Heart right ventricle (tissue), 16 donors: ENCODE measurements at regions of chr17 and their contacts with region 1.

Region 1: DNA sequence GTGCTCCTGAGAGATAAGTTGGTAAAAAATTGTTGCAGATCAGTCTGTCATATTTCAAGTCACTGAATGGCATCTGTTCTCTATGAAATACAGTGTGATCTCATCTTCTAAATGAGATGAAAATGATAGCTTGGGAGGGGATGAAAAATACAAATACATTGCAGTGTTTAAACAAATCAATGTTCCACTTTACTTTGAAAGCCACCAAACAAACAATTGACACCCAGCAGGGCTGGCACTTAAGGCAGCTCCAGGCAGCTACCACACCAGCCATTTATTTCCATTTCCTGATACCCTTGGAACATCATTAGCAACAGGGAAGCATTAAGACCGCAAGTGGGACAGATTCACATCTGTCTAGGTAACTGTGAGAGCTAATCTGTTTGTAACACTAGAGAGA is 827.6 kb upstream of the KIF2B start:
- DNase-seq: no peak
- ATAC-seq: no peak
- H3K4me3 ChIP-seq: no peak overlapping the region
- H3K27ac ChIP-seq: no peak overlapping the region
- H3K4me1 ChIP-seq: no peaks in the 10 kb centered on the region
- H3K27me3 ChIP-seq: no peaks in the 10 kb centered on the region
- CTCF ChIP-seq: no peak

Region 2: DNA sequence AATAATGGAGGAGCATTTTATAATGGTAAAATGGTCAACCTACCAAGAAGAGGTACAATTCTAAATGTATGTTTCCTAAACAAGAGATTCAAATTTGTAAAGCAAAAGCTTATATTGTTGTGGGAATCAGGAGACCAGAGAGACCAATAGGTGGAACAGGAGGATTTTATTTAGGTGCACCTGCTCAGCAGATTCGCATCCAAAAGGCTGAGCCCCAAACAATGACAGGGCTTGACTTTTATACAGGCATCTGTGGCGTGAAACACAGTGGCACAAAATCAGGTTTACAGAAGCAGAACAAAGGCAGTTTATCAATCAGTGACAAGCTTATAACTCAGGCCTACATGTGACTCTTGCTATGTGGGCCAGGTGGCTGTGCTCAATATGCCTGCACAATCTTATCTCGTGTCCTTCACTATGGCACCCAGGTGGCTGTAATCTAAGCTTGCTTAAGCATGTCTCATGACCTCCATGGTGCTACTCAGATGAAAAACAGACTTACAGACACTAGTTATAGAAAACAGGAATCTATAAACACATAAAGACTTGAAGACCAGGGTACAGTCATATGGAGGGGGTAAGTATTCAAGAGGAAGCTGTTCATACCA is 56.4 kb before region 1 on chr17:
- intact Hi-C with region 1: loop called in 1 of 10 experiments (anchors 10 kb)
- DNase-seq: no peak
- ATAC-seq: no peak
- H3K4me3 ChIP-seq: no peak overlapping the region
- H3K27ac ChIP-seq: no peak overlapping the region
- H3K4me1 ChIP-seq: no peaks in the 10 kb centered on the region
- H3K27me3 ChIP-seq: no peaks in the 10 kb centered on the region
- CTCF ChIP-seq: no peak